ENCODE measurements at regions of chr13 and their contacts with region 1.

Region 1: DNA sequence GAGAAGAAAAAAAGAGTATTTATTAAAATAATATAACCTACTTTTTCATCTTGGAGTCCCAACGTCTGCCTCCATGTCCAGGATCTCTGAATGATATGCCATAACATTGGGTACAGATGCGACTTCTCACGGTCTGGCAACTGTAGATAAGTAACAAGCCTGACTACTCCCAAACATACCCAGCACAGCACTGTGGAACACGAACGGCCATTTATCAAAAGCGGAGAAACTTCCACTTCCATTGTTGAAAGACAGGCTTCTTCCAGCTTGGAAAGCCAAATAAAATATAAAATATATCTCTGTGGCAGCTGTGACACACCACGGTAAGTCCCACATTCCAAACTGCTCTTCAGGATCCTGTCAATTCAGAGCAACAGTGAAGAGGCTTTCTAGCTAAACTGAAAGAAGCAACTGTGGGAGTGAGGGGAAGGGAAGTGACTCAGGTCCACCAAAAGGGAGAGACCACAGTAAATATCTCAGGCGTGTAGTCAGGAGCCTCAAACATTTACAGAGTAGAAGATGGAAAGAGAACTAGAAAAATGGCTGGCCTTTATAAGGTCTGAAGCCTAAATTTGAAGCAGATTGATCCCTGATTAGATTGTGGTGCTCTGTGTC is 331.7 kb downstream of the LIG4 start:
- DNase-seq: peak; percentile 84 to 98 (median 93)
- ATAC-seq: peak; percentile 89
- H3K4me3 ChIP-seq: peak overlapping the region; percentile 32
- H3K27ac ChIP-seq: peak overlapping the region; percentile 74
- H3K4me1 ChIP-seq: peaks cover 7 to 42% of the 10 kb centered on the region in 2 experiments; a peak in 4 of 5 replicates
- H3K27me3 ChIP-seq: no peaks in the 10 kb centered on the region
- CTCF ChIP-seq: no peak
- EP300 ChIP-seq: no peak
- POLR2A ChIP-seq: no peak
- RAD21 ChIP-seq: no peak

Region 2: GRCh38 chr13:107867701-107868661 is 15.7 kb before region 1 on chr13:
- CTCF ChIA-PET with region 1: no interaction called
- POLR2A ChIA-PET with region 1: interaction called, 52 read pairs
- in situ Hi-C with region 1: no loop called
- intact Hi-C with region 1: no loop called
- DNase-seq: peak; percentile 73 to 85 (median 78)
- ATAC-seq: peak; percentile 75
- H3K4me3 ChIP-seq: peak overlapping the region; percentile 48
- H3K27ac ChIP-seq: no peak overlapping the region; the same call in 2 of the 3 replicates
- H3K4me1 ChIP-seq: peaks cover 22 to 31% of the 10 kb centered on the region in 2 experiments; a peak in 4 of 5 replicates
- H3K27me3 ChIP-seq: peaks cover 18 to 28% of the 10 kb centered on the region in 2 experiments
- CTCF ChIP-seq: no peak
- EP300 ChIP-seq: no peak
- POLR2A ChIP-seq: no peak
- RAD21 ChIP-seq: no peak

Region 3: DNA sequence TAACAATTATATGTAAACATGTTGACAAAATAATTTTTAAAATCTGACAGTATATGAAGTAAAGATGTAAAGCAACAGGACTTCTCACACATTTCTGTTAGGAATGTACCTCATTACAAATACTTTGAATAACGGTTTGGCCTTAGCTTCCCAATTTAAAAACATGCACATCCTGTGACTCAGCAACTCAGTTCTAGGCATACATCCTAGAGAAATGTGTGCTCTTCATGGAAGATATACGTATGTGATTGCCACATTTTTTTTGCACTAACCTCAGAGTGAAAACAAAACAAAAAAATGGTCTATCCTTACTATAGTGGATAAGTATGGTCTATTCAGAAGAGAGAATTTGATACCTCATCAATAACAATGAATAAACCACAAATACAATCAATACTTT is 17.1 kb after region 1 on chr13:
- CTCF ChIA-PET with region 1: no interaction called
- POLR2A ChIA-PET with region 1: interaction called, 25 read pairs
- in situ Hi-C with region 1: no loop called
- intact Hi-C with region 1: loop called (anchors 1 kb)
- DNase-seq: peak in 3 of 4 experiments; percentile 53 to 73 (median 55)
- ATAC-seq: peak; percentile 49
- H3K4me3 ChIP-seq: no peak overlapping the region
- H3K27ac ChIP-seq: peak overlapping the region; percentile 19; the same call in 1 of the 3 replicates
- H3K4me1 ChIP-seq: peaks cover 0 to 26% of the 10 kb centered on the region in 2 experiments; a peak in 3 of 5 replicates
- H3K27me3 ChIP-seq: no peaks in the 10 kb centered on the region
- CTCF ChIP-seq: no peak
- EP300 ChIP-seq: no peak
- POLR2A ChIP-seq: no peak
- RAD21 ChIP-seq: no peak

Region 4: GRCh38 chr13:107907065-107907805 is 23.6 kb after region 1 on chr13:
- CTCF ChIA-PET with region 1: no interaction called
- POLR2A ChIA-PET with region 1: interaction called, 30 read pairs
- in situ Hi-C with region 1: no loop called
- intact Hi-C with region 1: loop called (anchors 1 kb)
- DNase-seq: no peak
- ATAC-seq: peak; percentile 6
- H3K4me3 ChIP-seq: no peak overlapping the region
- H3K27ac ChIP-seq: no peak overlapping the region
- H3K4me1 ChIP-seq: peaks cover 3 to 32% of the 10 kb centered on the region in 2 experiments
- H3K27me3 ChIP-seq: no peaks in the 10 kb centered on the region
- CTCF ChIP-seq: no peak
- EP300 ChIP-seq: no peak
- POLR2A ChIP-seq: no peak
- RAD21 ChIP-seq: no peak

Region 5: DNA sequence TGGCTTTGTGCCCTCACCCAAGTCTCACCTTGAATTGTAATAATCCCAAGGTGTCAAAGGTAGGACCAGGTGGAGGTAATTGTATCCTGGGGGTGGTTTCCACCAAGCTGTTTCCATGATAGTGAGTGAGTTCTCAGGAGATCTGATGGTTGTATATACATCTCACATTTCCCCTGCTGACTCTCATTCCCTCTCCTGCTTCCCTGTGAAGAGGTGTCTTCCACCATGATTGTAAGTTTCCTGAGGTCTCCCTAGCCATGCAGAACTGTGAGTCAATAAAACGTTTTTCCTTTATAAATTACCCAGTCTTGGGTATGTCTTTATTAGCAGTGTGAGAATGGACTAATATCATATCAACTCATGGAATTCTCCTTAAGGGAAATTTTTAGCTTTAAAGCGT is 29.1 kb after region 1 on chr13:
- CTCF ChIA-PET with region 1: no interaction called
- POLR2A ChIA-PET with region 1: interaction called, 30 read pairs
- in situ Hi-C with region 1: no loop called
- intact Hi-C with region 1: loop called (anchors 1 kb)
- DNase-seq: peak in 1 of 4 experiments; percentile 77
- ATAC-seq: peak; percentile 70
- H3K4me3 ChIP-seq: peak overlapping the region; percentile 39
- H3K27ac ChIP-seq: peak overlapping the region; percentile 60; the same call in 2 of the 3 replicates
- H3K4me1 ChIP-seq: peaks cover 3 to 36% of the 10 kb centered on the region in 2 experiments
- H3K27me3 ChIP-seq: no peaks in the 10 kb centered on the region
- CTCF ChIP-seq: no peak
- EP300 ChIP-seq: no peak
- POLR2A ChIP-seq: no peak
- RAD21 ChIP-seq: no peak

Region 6: GRCh38 chr13:107993239-107993872 is 109.7 kb after region 1 on chr13:
- CTCF ChIA-PET with region 1: no interaction called
- POLR2A ChIA-PET with region 1: no interaction called
- in situ Hi-C with region 1: no loop called
- intact Hi-C with region 1: loop called (anchors 5 kb)
- DNase-seq: peak; percentile 18 to 27 (median 22)
- ATAC-seq: peak; percentile 72
- H3K4me3 ChIP-seq: no peak overlapping the region
- H3K27ac ChIP-seq: no peak overlapping the region
- H3K4me1 ChIP-seq: no peaks in the 10 kb centered on the region
- H3K27me3 ChIP-seq: no peaks in the 10 kb centered on the region
- CTCF ChIP-seq: no peak
- EP300 ChIP-seq: no peak
- POLR2A ChIP-seq: no peak
- RAD21 ChIP-seq: no peak